A673 (cell line): ENCODE measurements at regions of chr20 and their contacts with region 1.

Region 1: GRCh38 chr20:20568604-20569205 is 143.7 kb downstream of the RALGAPA2 start:
- DNase-seq: peak; percentile 62
- H3K4me3 ChIP-seq: no peak overlapping the region
- H3K27ac ChIP-seq: no peak overlapping the region
- H3K4me1 ChIP-seq: no peaks in the 10 kb centered on the region
- H3K27me3 ChIP-seq: no peaks in the 10 kb centered on the region
- CTCF ChIP-seq: peak; percentile 82

Region 2: GRCh38 chr20:20360464-20360863 is 208.2 kb before region 1 on chr20:
- CTCF ChIA-PET with region 1: no interaction called
- POLR2A ChIA-PET with region 1: no interaction called
- intact Hi-C with region 1: loop called (anchors 2 kb)
- DNase-seq: peak; percentile 80
- H3K4me3 ChIP-seq: no peak overlapping the region
- H3K27ac ChIP-seq: no peak overlapping the region
- H3K4me1 ChIP-seq: no peaks in the 10 kb centered on the region
- H3K27me3 ChIP-seq: peaks cover 50% of the 10 kb centered on the region
- CTCF ChIP-seq: peak; percentile 78

Region 3: GRCh38 chr20:20827992-20828597 is 259.4 kb after region 1 on chr20:
- CTCF ChIA-PET with region 1: no interaction called
- POLR2A ChIA-PET with region 1: no interaction called
- intact Hi-C with region 1: no loop called
- DNase-seq: no peak
- H3K4me3 ChIP-seq: no peak overlapping the region
- H3K27ac ChIP-seq: no peak overlapping the region
- H3K4me1 ChIP-seq: peaks cover 11% of the 10 kb centered on the region
- H3K27me3 ChIP-seq: no peaks in the 10 kb centered on the region
- CTCF ChIP-seq: no peak